ENCODE measurements at regions of chr1 and their contacts with region 1.

Region 1: DNA sequence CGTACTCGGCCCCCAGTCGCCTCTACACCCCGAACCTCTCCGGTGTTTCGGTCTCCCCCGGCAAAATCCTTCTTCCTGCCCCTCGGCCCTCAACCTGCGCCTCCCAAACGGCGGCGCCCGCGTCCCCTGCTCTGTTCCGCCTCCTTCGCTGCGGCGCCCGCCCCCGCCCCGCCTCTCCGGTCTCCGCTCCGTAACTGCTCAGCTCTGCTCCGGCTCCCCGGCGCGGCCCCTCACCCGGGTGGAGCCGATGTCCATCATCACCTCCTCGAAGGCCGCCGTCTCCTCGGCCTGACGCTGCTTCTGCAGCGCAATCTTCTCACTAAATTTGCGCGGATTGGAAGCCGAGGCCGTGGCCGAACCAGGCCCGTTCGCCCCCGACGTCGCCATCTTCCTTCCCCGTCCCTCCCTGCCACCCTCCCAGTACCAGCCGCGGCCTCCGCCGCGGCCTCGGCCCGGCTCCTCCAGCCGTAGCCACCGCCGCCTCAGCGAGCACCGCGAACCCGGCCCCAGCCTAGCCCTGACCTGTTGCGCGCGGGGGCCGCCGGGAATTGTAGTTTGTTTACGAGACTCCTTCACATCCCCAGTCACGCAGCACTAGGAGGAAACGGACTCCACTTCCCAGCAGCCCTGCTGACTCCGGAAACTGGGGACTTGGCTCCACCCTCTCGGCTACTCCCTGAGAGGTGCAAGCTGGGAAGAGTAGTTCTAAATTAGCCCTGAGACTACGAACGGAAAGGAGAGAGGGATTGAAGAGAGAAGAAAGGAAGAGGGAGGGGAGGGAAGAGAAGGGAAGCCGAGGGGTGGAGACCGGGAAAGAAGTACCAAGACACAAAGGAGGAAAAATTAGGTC is at the start of gene CRTC2:
- DNase-seq: peak; percentile 99
- ATAC-seq: peak; percentile 90
- H3K4me3 Mint-ChIP-seq: peak within 1 kb of the TSS; percentile 99
- H3K27ac Mint-ChIP-seq: peak within 1 kb of the TSS; percentile 95
- H3K4me1 Mint-ChIP-seq: peaks cover 55% of the 10 kb centered on the region
- H3K27me3 Mint-ChIP-seq: no peaks in the 10 kb centered on the region
- total RNA-seq, gene CRTC2: 60.6 to 80.4 TPM

Region 2: DNA sequence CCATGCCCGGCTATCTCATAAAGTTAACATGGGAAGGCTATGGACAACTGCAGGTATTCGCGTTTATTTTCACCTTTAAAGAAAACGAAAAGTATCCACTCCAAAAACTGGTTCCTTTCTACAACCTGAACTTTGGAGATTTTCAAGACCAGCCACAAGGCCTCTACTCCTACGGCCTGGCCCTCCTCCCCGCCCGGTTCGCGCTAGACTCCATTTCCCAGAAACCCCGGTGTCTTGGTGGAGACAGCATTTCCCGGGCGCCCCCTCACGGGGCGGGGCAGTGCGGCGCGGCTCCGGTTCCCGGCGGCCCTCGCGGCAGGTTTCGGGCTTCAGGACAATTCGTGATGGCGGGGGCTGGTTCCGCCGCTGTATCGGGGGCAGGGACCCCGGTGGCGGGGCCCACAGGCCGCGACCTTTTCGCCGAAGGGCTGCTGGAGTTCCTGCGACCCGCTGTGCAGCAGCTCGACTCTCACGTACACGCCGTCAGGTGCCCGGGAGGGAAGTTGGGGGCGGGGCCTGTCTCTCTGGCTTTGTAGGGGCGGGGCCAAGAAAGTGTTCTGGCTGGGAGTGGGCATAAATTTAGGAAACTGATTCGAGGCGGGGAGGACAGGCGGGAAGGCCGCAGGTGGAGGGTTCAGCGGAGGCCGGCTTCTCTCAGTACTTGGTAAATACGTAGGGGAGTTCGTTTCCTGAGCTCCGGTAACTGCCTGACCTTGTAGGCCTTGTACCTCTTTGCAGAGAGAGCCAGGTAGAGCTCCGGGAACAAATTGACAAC is 299.7 kb before region 1 on chr1 and contains the start of gene SNAPIN:
- CTCF ChIA-PET with region 1: no interaction called
- POLR2A ChIA-PET with region 1: no interaction called
- intact Hi-C with region 1: loop called in 1 of 2 experiments (anchors 1 kb)
- DNase-seq: peak; percentile 96
- ATAC-seq: peak; percentile 96
- H3K4me3 Mint-ChIP-seq: peak within 1 kb of the TSS; percentile 95
- H3K27ac Mint-ChIP-seq: peak within 1 kb of the TSS; percentile 90
- H3K4me1 Mint-ChIP-seq: peaks cover 13% of the 10 kb centered on the region
- H3K27me3 Mint-ChIP-seq: no peaks in the 10 kb centered on the region
- total RNA-seq, gene SNAPIN: 34.2 to 38.4 TPM